Activated CD4-positive, alpha-beta T cell treated with anti-CD3 and anti-CD28 coated beads, Interleukin-2, amount 10 ng/mL, durations not matched to agents 24 days and 14 days (primary cell): ENCODE measurements at regions of chr4 and their contacts with region 1.

Region 1: DNA sequence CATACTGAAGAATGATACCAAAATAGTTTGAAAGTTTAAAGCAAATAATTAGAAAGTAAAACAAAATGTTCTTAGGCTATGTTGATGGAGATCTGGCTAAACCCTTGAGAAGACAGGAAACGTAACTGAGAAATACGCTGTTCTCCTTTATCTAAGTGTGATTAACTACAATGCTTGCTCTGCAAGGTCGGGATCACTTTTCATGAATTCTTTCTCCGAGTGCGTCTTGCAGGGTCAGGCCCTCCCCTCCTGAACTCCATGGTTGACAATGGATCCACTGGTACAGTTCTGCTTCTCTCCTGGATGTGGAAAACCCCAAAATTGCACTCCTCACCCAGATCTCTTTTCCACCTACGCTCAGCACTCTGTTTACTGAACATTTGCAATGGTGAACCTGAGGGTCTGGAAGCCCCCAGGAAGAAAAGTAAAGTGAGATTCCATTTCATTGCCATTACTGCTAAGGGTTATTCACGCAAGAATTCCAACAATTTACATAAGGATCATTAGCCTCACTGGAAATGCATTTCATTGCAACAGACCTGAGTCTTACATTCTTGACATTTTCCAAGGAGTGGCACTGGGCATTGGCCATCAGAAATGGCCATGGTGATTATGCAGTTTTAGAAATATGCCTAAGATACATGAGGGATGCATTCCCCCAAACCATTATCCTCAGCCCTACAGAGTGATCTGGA is 24.6 kb upstream of the WWC2 start:
- DNase-seq: no peak
- H3K4me3 Mint-ChIP-seq: no peak overlapping the region
- H3K27ac Mint-ChIP-seq: no peak overlapping the region
- H3K4me1 Mint-ChIP-seq: peaks cover 1% of the 10 kb centered on the region
- H3K27me3 Mint-ChIP-seq: peaks cover 18% of the 10 kb centered on the region

Region 2: GRCh38 chr4:182938205-182938645 is 136.2 kb before region 1 on chr4:
- intact Hi-C with region 1: loop called (anchors 2 kb)
- DNase-seq: peak; percentile 90
- H3K4me3 Mint-ChIP-seq: no peak overlapping the region
- H3K27ac Mint-ChIP-seq: no peak overlapping the region
- H3K4me1 Mint-ChIP-seq: peaks cover 3% of the 10 kb centered on the region
- H3K27me3 Mint-ChIP-seq: peaks cover 6% of the 10 kb centered on the region

Region 3: DNA sequence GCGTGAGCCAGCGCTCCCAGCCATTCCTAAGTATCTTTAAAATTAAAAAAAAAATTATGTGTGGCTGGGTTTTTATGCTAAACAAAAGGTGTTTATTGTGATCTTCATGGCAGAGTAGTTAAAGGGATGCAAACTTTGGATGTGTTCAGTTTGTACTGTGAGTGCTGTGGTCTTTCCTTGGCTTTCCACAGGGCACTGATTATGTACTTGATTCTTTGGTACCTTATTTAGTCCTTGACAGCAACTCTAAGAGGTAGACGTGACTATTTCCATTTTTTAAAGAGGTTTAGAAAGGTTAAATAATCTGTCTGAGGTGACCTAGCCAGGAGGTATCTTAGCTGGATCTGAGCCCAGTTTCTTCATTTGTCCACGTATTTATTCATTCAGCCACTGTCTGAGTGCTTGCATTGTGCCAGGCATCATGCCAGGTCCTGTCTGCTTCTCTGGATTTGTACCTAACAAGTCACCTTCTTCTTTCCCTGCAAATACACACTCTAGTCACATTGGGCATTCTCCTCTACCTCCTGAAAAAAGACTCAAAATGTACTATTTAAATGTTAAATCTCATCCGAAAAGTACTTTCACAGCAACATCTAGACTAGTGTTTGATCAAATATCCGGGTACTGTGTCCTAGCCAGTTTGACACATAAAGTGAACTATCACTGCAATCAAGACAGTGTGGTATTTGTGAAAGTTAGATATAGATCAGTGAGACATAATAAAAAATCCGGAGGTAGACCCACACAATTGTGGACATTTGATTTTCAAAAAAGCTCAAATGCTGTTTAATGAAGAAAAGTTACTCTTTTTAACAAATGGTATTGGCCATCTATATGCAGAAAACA is 56.1 kb after region 1 on chr4:
- intact Hi-C with region 1: no loop called
- DNase-seq: peak; percentile 6
- H3K4me3 Mint-ChIP-seq: no peak overlapping the region
- H3K27ac Mint-ChIP-seq: no peak overlapping the region
- H3K4me1 Mint-ChIP-seq: no peaks in the 10 kb centered on the region
- H3K27me3 Mint-ChIP-seq: peaks cover 4% of the 10 kb centered on the region

Region 4: GRCh38 chr4:183287677-183288076 is 213.2 kb after region 1 on chr4:
- intact Hi-C with region 1: no loop called
- DNase-seq: no peak
- H3K4me3 Mint-ChIP-seq: no peak overlapping the region
- H3K27ac Mint-ChIP-seq: no peak overlapping the region
- H3K4me1 Mint-ChIP-seq: no peaks in the 10 kb centered on the region
- H3K27me3 Mint-ChIP-seq: no peaks in the 10 kb centered on the region

Region 5: GRCh38 chr4:183407128-183407585 is 332.7 kb after region 1 on chr4:
- intact Hi-C with region 1: loop called (anchors 10 kb)
- DNase-seq: peak; percentile 97
- H3K4me3 Mint-ChIP-seq: peak overlapping the region; percentile 80
- H3K27ac Mint-ChIP-seq: peak overlapping the region; percentile 52
- H3K4me1 Mint-ChIP-seq: peaks cover 9% of the 10 kb centered on the region
- H3K27me3 Mint-ChIP-seq: peaks cover 2% of the 10 kb centered on the region